Left cardiac atrium (tissue), 4 donors: ENCODE measurements at regions of chr6 and their contacts with region 1.

Region 1: DNA sequence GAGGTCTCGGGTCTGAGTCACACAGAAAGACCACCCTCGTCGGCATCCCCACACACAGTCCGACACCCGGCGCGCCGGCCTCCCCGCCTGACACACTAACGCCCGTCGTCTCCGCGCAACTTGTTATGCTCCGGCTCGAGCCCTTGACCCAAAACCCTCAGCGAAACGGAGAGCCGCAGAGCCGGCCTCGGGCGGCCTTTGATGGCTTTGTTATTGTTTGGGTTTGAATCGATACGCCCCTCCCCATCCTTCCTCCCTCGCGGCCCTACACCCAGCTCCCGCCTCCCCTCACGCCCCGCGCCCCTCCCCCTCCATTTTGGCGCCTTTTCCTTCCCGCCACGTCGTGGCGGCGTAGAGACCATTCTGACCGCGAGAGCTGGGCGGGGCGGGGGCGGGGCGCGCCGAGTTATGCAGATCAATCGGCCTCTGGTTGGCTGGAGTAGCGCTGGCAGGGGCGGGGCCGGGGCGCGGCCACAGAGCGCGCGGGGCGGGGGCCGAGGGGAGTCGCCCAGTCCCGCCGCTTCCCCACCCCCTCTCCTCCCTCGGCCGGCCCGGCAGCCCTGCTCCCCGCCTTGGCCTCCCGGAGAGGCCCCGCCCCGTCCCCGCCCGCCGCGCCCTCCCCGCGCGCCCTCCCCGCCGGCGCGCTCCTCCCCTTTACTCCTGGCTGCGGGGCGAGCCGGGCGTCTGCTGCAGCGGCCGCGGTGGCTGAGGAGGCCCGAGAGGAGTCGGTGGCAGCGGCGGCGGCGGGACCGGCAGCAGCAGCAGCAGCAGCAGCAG is at the start of gene PIM1:
- DNase-seq: peak; percentile 99
- ATAC-seq: peak; percentile 93 to 95
- total RNA-seq, gene PIM1: 41.7 to 101 TPM

Region 2: DNA sequence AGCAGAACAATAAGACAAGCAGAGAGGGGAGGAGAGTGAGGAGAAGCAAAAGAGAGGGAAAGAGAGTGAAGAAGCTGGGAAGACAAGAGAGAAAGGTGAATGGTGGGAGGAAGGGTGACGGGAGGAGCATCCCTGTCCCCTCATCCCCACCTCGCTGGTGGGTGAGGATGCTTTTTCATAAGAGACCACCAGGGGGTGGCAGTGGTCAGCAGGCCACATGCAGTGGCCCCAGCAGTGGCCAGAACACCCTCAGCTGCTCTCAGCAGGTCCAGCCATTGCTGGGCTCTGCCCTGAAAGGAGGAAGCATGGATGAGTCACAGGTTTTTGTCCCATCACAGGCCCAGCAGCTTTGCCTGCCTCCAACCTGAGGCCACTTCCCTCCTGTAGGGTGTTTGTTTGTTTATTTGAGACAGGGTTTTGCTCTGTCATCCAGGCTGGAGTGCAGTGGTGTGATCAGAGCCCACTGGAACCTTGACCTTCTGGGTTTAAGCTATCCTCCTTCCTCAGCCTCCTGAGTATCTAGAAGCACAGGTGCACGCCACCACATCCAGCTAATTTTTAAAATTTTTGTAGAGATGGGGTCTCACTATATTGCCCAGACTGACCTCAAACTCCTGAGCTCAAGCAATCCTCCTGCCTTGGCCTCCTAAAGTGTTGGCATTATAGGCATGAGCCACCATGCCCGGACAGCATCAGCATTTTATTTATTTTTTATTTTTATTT is 140.3 kb before region 1 on chr6:
- intact Hi-C with region 1: loop called in 1 of 2 experiments (anchors 5 kb)
- DNase-seq: peak; percentile 81
- ATAC-seq: peak; percentile 88 to 93

Region 3: DNA sequence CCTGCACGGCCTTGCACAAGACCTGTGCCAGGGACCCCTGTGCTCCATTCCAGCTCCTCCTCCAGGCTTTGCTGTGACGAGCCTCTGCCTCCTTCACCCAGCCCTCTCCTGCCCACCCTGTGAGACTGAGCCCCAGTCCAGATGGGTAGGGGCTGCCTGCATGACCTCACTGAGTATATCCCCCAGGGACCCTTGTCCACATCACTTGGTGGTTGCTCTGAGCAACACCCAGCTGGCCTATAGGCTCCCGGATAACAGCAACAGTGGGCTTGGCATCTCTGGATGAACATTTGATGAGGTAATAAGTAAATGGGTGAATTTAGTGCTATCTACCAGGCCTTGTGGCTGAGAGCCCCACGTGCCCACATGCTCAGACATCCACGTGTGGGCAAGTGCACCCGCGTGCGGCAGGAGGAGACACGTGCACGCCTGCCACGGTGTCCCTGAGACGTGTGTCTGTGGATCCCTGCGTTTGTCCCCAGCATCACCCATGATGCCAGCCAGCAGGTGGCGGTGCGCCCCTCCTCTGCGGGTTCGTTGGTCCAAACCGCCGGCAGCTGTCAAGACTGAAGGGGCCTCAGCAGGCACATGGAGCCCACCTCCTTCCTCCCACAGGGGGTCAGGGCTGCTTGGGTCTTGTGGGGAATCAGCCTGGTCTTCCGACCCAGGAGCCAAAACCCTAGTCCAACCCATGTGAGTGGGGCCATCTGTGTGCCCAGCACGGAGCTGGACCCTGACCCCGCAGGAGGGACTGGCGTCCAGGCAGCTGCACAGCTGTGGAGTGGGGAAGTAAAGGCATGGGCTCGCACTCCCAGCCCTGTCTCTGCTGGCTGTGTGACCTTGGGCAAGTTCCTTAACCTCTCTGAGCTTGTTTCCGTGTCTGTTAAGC is 118.3 kb before region 1 on chr6:
- intact Hi-C with region 1: loop called (anchors 1 to 5 kb)
- DNase-seq: peak; percentile 93
- ATAC-seq: peak; percentile 78 to 85

Region 4: GRCh38 chr6:37059344-37060206 is 110.1 kb before region 1 on chr6:
- intact Hi-C with region 1: loop called in 1 of 2 experiments (anchors 5 kb)
- DNase-seq: peak; percentile 78
- ATAC-seq: peak; percentile 69 to 93

Region 5: GRCh38 chr6:37134606-37135191 is 35.0 kb before region 1 on chr6:
- intact Hi-C with region 1: loop called in 1 of 2 experiments (anchors 5 kb)
- DNase-seq: peak; percentile 40
- ATAC-seq: peak; percentile 7 to 65

Region 6: GRCh38 chr6:37489660-37490361 is 320.1 kb after region 1 on chr6:
- intact Hi-C with region 1: no loop called
- DNase-seq: no peak
- ATAC-seq: peak; percentile 40 to 43